Endothelial cell of umbilical vein (primary cell): ENCODE measurements at regions of chr15 and their contacts with region 1.

Region 1: GRCh38 chr15:79339564-79340314 is 28.8 kb downstream of the TMED3 start:
- DNase-seq: peak; percentile 69
- H3K4me3 ChIP-seq: no peak overlapping the region
- H3K27ac ChIP-seq: no peak overlapping the region
- H3K4me1 ChIP-seq: no peaks in the 10 kb centered on the region
- H3K27me3 ChIP-seq: no peaks in the 10 kb centered on the region
- CTCF ChIP-seq: peak; percentile 61 to 71
- POLR2A ChIP-seq: no peak

Region 2: DNA sequence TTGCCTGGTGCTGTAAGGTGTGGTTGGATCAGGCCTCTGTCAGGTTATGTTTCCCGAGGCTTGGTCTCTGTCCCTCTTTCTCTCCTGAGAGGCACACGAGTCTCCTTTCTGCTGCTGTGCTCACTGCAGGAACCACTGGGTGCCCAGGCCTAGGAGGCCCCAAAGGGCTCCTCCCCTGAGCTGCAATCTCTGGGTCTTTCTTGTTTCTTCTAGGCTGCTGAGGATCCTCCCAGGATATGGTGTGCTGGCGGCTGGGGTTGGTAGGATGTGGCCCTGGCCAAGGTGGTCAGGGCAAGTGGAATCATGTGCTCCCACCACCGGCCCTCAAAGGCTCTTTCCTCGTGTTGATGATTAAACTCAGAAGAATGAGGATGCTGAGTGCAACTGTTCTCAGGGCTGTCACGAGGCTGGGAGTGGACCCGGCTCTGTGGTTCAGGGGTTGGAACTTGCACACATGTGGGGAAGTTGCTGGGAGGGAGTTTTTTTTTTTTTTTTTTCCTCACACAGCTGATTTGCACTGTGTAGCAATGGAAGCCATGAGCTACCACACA is 351.3 kb before region 1 on chr15:
- CTCF ChIA-PET with region 1: no interaction called
- POLR2A ChIA-PET with region 1: no interaction called
- dilution Hi-C with region 1: no loop called
- intact Hi-C with region 1: no loop called
- DNase-seq: peak; percentile 90
- H3K4me3 ChIP-seq: no peak overlapping the region
- H3K27ac ChIP-seq: no peak overlapping the region
- H3K4me1 ChIP-seq: peaks cover 12% of the 10 kb centered on the region
- H3K27me3 ChIP-seq: peaks cover 0 to 2% of the 10 kb centered on the region in 2 experiments
- CTCF ChIP-seq: no peak
- POLR2A ChIP-seq: no peak

Region 3: GRCh38 chr15:79168922-79169456 is 170.8 kb before region 1 on chr15:
- CTCF ChIA-PET with region 1: no interaction called
- POLR2A ChIA-PET with region 1: no interaction called
- dilution Hi-C with region 1: no loop called
- intact Hi-C with region 1: no loop called
- DNase-seq: peak; percentile 8
- H3K4me3 ChIP-seq: no peak overlapping the region
- H3K27ac ChIP-seq: no peak overlapping the region
- H3K4me1 ChIP-seq: no peaks in the 10 kb centered on the region
- H3K27me3 ChIP-seq: no peaks in the 10 kb centered on the region
- CTCF ChIP-seq: no peak
- POLR2A ChIP-seq: no peak

Region 4: DNA sequence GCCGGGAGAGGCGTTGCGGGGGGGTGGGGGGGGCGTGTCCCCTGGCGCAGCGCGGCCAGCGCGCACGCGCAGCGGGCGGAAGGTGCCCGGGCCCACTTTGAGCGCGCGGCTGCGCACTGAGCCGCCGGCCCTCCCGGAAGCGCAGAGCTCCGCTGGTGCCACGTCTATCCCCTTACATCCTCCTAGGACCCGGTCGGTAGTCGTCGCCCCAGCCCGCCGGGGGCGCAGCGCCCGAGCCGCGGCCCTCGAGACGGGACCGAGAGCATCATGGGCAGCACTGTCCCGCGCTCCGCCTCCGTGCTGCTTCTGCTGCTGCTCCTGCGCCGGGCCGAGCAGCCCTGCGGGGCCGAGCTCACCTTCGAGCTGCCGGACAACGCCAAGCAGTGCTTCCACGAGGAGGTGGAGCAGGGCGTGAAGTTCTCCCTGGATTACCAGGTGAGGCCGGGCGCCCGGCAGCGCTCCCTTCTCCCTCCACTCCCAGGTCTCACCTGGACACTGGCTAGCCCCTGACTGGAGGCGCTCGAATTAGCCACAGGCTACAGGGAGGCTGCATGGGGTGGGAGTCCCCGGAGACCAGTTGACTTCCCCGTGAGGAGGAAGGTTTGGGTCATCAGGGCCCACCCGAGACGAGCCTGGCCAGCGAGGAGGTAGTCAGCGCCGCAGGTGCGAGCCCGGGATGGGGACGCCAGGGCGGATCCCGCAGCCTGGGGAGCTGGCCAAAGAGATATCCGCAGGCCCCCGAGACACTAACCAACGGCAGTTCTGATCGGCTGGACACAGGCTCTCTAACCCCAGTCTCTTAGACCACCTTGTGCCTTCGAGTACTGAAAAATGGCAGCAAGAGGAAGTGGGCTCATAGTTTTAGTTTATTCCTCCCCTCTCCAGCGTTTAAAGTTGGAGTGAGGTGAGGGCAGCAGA is 28.5 kb before region 1 on chr15 and contains the start of gene TMED3:
- CTCF ChIA-PET with region 1: interaction called, 27 read pairs
- POLR2A ChIA-PET with region 1: no interaction called
- dilution Hi-C with region 1: no loop called
- intact Hi-C with region 1: loop called (anchors 1 kb)
- DNase-seq: peak; percentile 85
- H3K4me3 ChIP-seq: peak within 1 kb of the TSS; percentile 61 to 74 (median 65)
- H3K27ac ChIP-seq: peak within 1 kb of the TSS; percentile 22
- H3K4me1 ChIP-seq: peaks cover 16% of the 10 kb centered on the region
- H3K27me3 ChIP-seq: peaks cover 13 to 28% of the 10 kb centered on the region in 2 experiments
- CTCF ChIP-seq: peak; percentile 18 to 35
- POLR2A ChIP-seq: peak; percentile 77
- total RNA-seq, gene TMED3: 105 and 114 TPM in 2 replicates

Region 5: GRCh38 chr15:79329171-79329611 is 10.5 kb before region 1 on chr15:
- CTCF ChIA-PET with region 1: interaction called, 23 read pairs
- POLR2A ChIA-PET with region 1: no interaction called
- dilution Hi-C with region 1: no loop called
- intact Hi-C with region 1: no loop called
- DNase-seq: peak; percentile 84
- H3K4me3 ChIP-seq: no peak overlapping the region
- H3K27ac ChIP-seq: peak overlapping the region; percentile 78
- H3K4me1 ChIP-seq: peaks cover 10% of the 10 kb centered on the region
- H3K27me3 ChIP-seq: no peaks in the 10 kb centered on the region
- CTCF ChIP-seq: no peak
- POLR2A ChIP-seq: no peak

Region 6: GRCh38 chr15:79467865-79468586 is 128.3 kb after region 1 on chr15:
- CTCF ChIA-PET with region 1: no interaction called
- POLR2A ChIA-PET with region 1: no interaction called
- dilution Hi-C with region 1: no loop called
- intact Hi-C with region 1: no loop called
- DNase-seq: no peak
- H3K4me3 ChIP-seq: no peak overlapping the region
- H3K27ac ChIP-seq: no peak overlapping the region
- H3K4me1 ChIP-seq: no peaks in the 10 kb centered on the region
- H3K27me3 ChIP-seq: no peaks in the 10 kb centered on the region
- CTCF ChIP-seq: no peak
- POLR2A ChIP-seq: no peak

Region 7: GRCh38 chr15:79596051-79596507 is 256.3 kb after region 1 on chr15:
- CTCF ChIA-PET with region 1: interaction called, 40 read pairs
- POLR2A ChIA-PET with region 1: no interaction called
- dilution Hi-C with region 1: no loop called
- intact Hi-C with region 1: loop called (anchors 1 kb)
- DNase-seq: peak; percentile 64
- H3K4me3 ChIP-seq: no peak overlapping the region
- H3K27ac ChIP-seq: no peak overlapping the region
- H3K4me1 ChIP-seq: no peaks in the 10 kb centered on the region
- H3K27me3 ChIP-seq: no peaks in the 10 kb centered on the region
- CTCF ChIP-seq: peak; percentile 79 to 94
- POLR2A ChIP-seq: no peak

Region 8: GRCh38 chr15:80309769-80310384 is 970.1 kb after region 1 on chr15:
- CTCF ChIA-PET with region 1: interaction called, 14 read pairs
- POLR2A ChIA-PET with region 1: no interaction called
- dilution Hi-C with region 1: no loop called
- intact Hi-C with region 1: no loop called
- DNase-seq: peak; percentile 11
- H3K4me3 ChIP-seq: no peak overlapping the region
- H3K27ac ChIP-seq: no peak overlapping the region
- H3K4me1 ChIP-seq: no peaks in the 10 kb centered on the region
- H3K27me3 ChIP-seq: no peaks in the 10 kb centered on the region
- CTCF ChIP-seq: peak; percentile 24 to 33
- POLR2A ChIP-seq: no peak